ENCODE measurements at regions of chrX and their contacts with region 1.

Region 1: DNA sequence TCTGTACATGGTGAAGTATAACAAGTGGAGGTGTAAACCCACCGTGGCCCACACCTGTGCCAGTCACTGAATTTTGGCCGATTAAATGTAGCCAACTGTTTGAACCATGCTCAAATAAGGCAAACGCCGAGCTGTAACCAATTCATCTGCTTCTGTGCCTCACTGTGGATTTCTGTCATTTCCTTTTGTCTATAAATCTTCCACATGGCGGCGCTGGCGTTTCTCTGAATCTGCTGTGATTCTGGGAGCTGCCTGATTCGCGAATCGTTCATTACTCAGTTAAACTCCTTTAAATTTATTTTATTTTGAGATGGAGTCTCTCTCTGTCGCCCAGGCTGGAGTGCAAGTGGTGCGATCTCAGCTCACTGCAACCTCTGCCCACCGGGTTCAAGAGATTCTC is 19.2 kb downstream of the SUPT20HL2 start:
- DNase-seq: peak in 2 of 4 experiments; percentile 12 to 35
- ATAC-seq: peak; percentile 79
- H3K4me3 ChIP-seq: no peak overlapping the region
- H3K27ac ChIP-seq: no peak overlapping the region
- H3K4me1 ChIP-seq: no peaks in the 10 kb centered on the region; a peak in 1 of 5 replicates
- H3K27me3 ChIP-seq: peaks cover 2 to 24% of the 10 kb centered on the region in 2 experiments; a peak in 4 of 5 replicates
- CTCF ChIP-seq: peak; percentile 37 to 53 (median 40); a peak in 5 of 6 replicates
- EP300 ChIP-seq: no peak
- POLR2A ChIP-seq: no peak
- RAD21 ChIP-seq: peak in 1 of 2 experiments; percentile 39; a peak in 2 of 4 replicates

Region 2: GRCh38 chrX:24259544-24260240 is 34.9 kb before region 1 on chrX:
- CTCF ChIA-PET with region 1: no interaction called
- POLR2A ChIA-PET with region 1: no interaction called
- in situ Hi-C with region 1: no loop called
- intact Hi-C with region 1: loop called (anchors 5 kb)
- DNase-seq: peak; percentile 12 to 68 (median 26)
- ATAC-seq: peak; percentile 83
- H3K4me3 ChIP-seq: no peak overlapping the region
- H3K27ac ChIP-seq: no peak overlapping the region
- H3K4me1 ChIP-seq: no peaks in the 10 kb centered on the region
- H3K27me3 ChIP-seq: peaks cover 0 to 14% of the 10 kb centered on the region in 2 experiments; a peak in 3 of 5 replicates
- CTCF ChIP-seq: peak; percentile 58 to 74 (median 59)
- EP300 ChIP-seq: no peak
- POLR2A ChIP-seq: no peak
- RAD21 ChIP-seq: peak; percentile 43 to 66

Region 3: GRCh38 chrX:24395775-24396174 is 101.2 kb after region 1 on chrX:
- CTCF ChIA-PET with region 1: no interaction called
- POLR2A ChIA-PET with region 1: no interaction called
- in situ Hi-C with region 1: no loop called
- intact Hi-C with region 1: no loop called
- DNase-seq: peak; percentile 40 to 54 (median 50)
- ATAC-seq: peak; percentile 81
- H3K4me3 ChIP-seq: no peak overlapping the region
- H3K27ac ChIP-seq: no peak overlapping the region
- H3K4me1 ChIP-seq: no peaks in the 10 kb centered on the region
- H3K27me3 ChIP-seq: peaks cover 0 to 16% of the 10 kb centered on the region in 2 experiments; a peak in 3 of 5 replicates
- CTCF ChIP-seq: peak; percentile 67 to 85 (median 67)
- EP300 ChIP-seq: no peak
- POLR2A ChIP-seq: no peak
- RAD21 ChIP-seq: peak; percentile 82 to 89

Region 4: GRCh38 chrX:24676403-24677024 is 381.9 kb after region 1 on chrX:
- CTCF ChIA-PET with region 1: no interaction called
- POLR2A ChIA-PET with region 1: no interaction called
- in situ Hi-C with region 1: no loop called
- intact Hi-C with region 1: no loop called
- DNase-seq: peak in 3 of 4 experiments; percentile 18 to 25 (median 18)
- ATAC-seq: peak; percentile 74
- H3K4me3 ChIP-seq: no peak overlapping the region
- H3K27ac ChIP-seq: no peak overlapping the region
- H3K4me1 ChIP-seq: peaks cover 0 to 2% of the 10 kb centered on the region in 2 experiments; a peak in 2 of 5 replicates
- H3K27me3 ChIP-seq: no peaks in the 10 kb centered on the region
- CTCF ChIP-seq: peak; percentile 38 to 58 (median 41); a peak in 4 of 6 replicates
- EP300 ChIP-seq: no peak
- POLR2A ChIP-seq: no peak
- RAD21 ChIP-seq: no peak

Measured in K562 (cell line).